Posterior cingulate gyrus (tissue), 11 donors: ENCODE measurements at regions of chr6 and their contacts with region 1.

Region 1: GRCh38 chr6:51855310-51856082 is 231.9 kb downstream of the PKHD1 start:
- DNase-seq: no peak

Region 2: GRCh38 chr6:51901766-51902764 is 46.6 kb after region 1 on chr6:
- intact Hi-C with region 1: no loop called
- DNase-seq: peak in 1 of 10 donors; percentile 15

Region 3: GRCh38 chr6:51959744-51960383 is 104.4 kb after region 1 on chr6:
- intact Hi-C with region 1: loop called (anchors 1 kb)
- DNase-seq: peak; percentile 45 to 95 (median 72)

Region 4: GRCh38 chr6:52020945-52021570 is 165.6 kb after region 1 on chr6:
- intact Hi-C with region 1: loop called (anchors 10 kb)
- DNase-seq: no peak

Region 5: DNA sequence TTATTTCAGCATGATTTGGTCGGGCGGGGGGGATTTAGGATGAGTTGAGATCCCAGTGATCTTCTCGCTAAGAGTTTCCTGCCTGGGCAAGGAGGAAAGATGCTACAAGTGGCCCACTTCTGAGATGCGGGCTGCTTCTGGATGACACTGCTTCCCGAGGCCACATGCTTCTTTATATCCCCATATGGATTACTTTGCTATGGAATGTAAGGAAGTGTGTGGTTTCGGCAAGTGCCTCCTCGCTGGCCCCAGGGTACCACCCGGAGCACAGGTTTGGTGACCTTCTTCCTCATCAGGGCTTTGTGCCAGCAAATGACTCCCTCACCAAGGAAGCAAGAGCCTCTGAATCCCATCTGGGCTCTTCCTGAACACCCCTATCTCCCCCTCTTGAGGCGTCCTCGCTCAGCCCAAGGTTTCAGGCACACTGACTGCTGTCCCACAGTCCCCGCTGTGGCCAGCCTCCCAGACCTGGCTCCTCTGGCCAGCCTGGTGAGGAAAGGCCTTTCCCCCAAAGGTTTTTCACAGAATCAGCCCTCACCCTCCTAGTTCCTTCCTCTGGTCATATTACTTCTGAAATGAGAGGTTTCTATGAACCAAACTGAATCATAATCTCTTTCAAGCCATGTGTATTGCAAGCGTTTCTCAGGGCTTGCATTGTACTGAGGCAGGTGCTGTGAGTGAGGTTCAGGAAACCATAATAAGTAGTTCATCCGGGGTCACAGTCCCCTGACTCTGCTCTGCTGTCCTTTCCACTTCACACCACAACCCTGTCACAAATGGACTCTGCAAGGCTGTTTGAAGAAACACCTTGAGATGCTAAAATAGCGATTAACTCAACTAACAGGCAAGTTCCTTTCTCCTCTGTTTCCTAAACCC is 288.9 kb after region 1 on chr6:
- intact Hi-C with region 1: no loop called
- DNase-seq: no peak

Region 6: GRCh38 chr6:52707963-52708680 is 852.6 kb after region 1 on chr6:
- intact Hi-C with region 1: no loop called
- DNase-seq: no peak